Colonic mucosa (tissue), 4 donors: ENCODE measurements at regions of chr4 and their contacts with region 1.

Region 1: GRCh38 chr4:119559044-119559647 is 69.5 kb downstream of the PDE5A start:
- DNase-seq: no peak
- H3K4me3 ChIP-seq: no peak overlapping the region
- H3K27ac ChIP-seq: no peak overlapping the region
- H3K4me1 ChIP-seq: no peaks in the 10 kb centered on the region
- H3K27me3 ChIP-seq: no peaks in the 10 kb centered on the region
- CTCF ChIP-seq: peak; percentile 41

Region 2: GRCh38 chr4:119152741-119153140 is 406.4 kb before region 1 on chr4:
- intact Hi-C with region 1: no loop called
- DNase-seq: no peak
- H3K4me3 ChIP-seq: no peak overlapping the region
- H3K27ac ChIP-seq: no peak overlapping the region
- H3K4me1 ChIP-seq: no peaks in the 10 kb centered on the region
- H3K27me3 ChIP-seq: no peaks in the 10 kb centered on the region
- CTCF ChIP-seq: no peak

Region 3: GRCh38 chr4:119697887-119698393 is 138.8 kb after region 1 on chr4:
- intact Hi-C with region 1: no loop called
- DNase-seq: no peak
- H3K4me3 ChIP-seq: no peak overlapping the region
- H3K27ac ChIP-seq: no peak overlapping the region
- H3K4me1 ChIP-seq: no peaks in the 10 kb centered on the region
- H3K27me3 ChIP-seq: no peaks in the 10 kb centered on the region
- CTCF ChIP-seq: no peak

Region 4: GRCh38 chr4:119735165-119735651 is 176.1 kb after region 1 on chr4:
- intact Hi-C with region 1: no loop called
- DNase-seq: no peak
- H3K4me3 ChIP-seq: no peak overlapping the region
- H3K27ac ChIP-seq: no peak overlapping the region
- H3K4me1 ChIP-seq: peaks cover 5% of the 10 kb centered on the region
- H3K27me3 ChIP-seq: no peaks in the 10 kb centered on the region
- CTCF ChIP-seq: no peak

Region 5: GRCh38 chr4:119785963-119786362 is 226.8 kb after region 1 on chr4:
- intact Hi-C with region 1: loop called (anchors 5 kb)
- DNase-seq: no peak
- H3K4me3 ChIP-seq: no peak overlapping the region
- H3K27ac ChIP-seq: no peak overlapping the region
- H3K4me1 ChIP-seq: no peaks in the 10 kb centered on the region
- H3K27me3 ChIP-seq: no peaks in the 10 kb centered on the region
- CTCF ChIP-seq: peak; percentile 27

Region 6: GRCh38 chr4:120049732-120050494 is 490.8 kb after region 1 on chr4:
- intact Hi-C with region 1: loop called (anchors 5 kb)
- DNase-seq: peak; percentile 90
- H3K4me3 ChIP-seq: no peak overlapping the region
- H3K27ac ChIP-seq: peak overlapping the region; percentile 34
- H3K4me1 ChIP-seq: no peaks in the 10 kb centered on the region
- H3K27me3 ChIP-seq: no peaks in the 10 kb centered on the region
- CTCF ChIP-seq: peak; percentile 81

Region 7: GRCh38 chr4:120238277-120238973 is 679.3 kb after region 1 on chr4:
- intact Hi-C with region 1: no loop called
- DNase-seq: no peak
- H3K4me3 ChIP-seq: no peak overlapping the region
- H3K27ac ChIP-seq: no peak overlapping the region
- H3K4me1 ChIP-seq: no peaks in the 10 kb centered on the region
- H3K27me3 ChIP-seq: no peaks in the 10 kb centered on the region
- CTCF ChIP-seq: no peak